ENCODE measurements at regions of chr1 and their contacts with region 1.

Region 1: DNA sequence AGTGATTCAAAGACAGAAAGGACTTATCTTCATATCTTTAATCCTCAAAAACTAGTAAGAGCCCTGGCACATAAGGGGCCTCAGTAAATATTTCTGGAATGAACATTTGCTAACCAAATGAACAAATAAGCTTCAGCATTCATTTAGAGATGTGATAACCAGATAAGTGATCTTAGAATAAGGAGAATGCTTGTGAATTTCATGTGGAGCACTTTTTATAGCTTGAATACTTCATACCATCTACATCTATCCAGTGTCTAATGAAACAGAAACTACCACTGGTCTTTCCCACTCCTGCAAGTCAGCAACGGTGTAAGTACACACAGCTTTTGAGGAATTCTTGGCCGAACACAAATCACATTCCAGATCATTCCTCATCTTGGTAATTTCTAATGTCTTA is 38.5 kb downstream of the EDEM3 start:
- DNase-seq: no peak
- ATAC-seq: no peak
- H3K4me3 ChIP-seq: no peak overlapping the region
- H3K4me3 Mint-ChIP-seq: no peak overlapping the region
- H3K27ac ChIP-seq: no peak overlapping the region
- H3K27ac Mint-ChIP-seq: peak overlapping the region; percentile 56
- H3K4me1 ChIP-seq: no peaks in the 10 kb centered on the region
- H3K4me1 Mint-ChIP-seq: no peaks in the 10 kb centered on the region
- H3K27me3 ChIP-seq: no peaks in the 10 kb centered on the region
- H3K27me3 Mint-ChIP-seq: no peaks in the 10 kb centered on the region
- CTCF ChIP-seq: no peak

Region 2: DNA sequence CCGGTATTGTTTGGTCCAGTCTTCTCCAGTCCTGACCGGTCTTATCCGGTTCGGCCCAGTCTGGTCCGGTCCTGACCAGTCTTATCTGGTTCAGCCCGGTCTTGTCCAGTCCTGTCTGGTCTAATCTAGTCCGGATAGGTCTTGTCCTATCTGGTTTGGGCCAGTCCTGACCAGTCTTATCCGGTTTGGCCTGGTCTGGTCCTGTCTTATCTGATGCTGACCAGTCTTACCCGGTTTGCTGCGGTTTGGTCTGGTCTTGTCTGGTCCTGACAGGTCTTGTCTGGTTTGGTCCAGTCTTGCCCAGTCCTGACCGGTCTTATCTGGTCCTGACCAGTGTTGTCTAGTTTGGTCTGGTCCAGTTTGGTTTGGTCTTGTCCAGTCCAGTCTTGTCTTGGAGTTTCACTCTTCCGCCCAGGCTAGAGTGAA is 1846.9 kb before region 1 on chr1:
- CTCF ChIA-PET with region 1: no interaction called
- POLR2A ChIA-PET with region 1: no interaction called
- intact Hi-C with region 1: loop called in 1 of 2 experiments (anchors 10 kb)
- DNase-seq: peak in 3 of 9 experiments; percentile 13 to 20 (median 19)
- ATAC-seq: no peak
- H3K4me3 ChIP-seq: no peak overlapping the region
- H3K4me3 Mint-ChIP-seq: no peak overlapping the region
- H3K27ac ChIP-seq: no peak overlapping the region
- H3K27ac Mint-ChIP-seq: peak overlapping the region; percentile 13
- H3K4me1 ChIP-seq: no peaks in the 10 kb centered on the region
- H3K4me1 Mint-ChIP-seq: peaks cover 7% of the 10 kb centered on the region
- H3K27me3 ChIP-seq: no peaks in the 10 kb centered on the region
- H3K27me3 Mint-ChIP-seq: no peaks in the 10 kb centered on the region
- CTCF ChIP-seq: no peak

Region 3: GRCh38 chr1:184759651-184760050 is 43.5 kb after region 1 on chr1:
- CTCF ChIA-PET with region 1: no interaction called
- POLR2A ChIA-PET with region 1: no interaction called
- intact Hi-C with region 1: no loop called
- DNase-seq: no peak
- ATAC-seq: no peak
- H3K4me3 ChIP-seq: no peak overlapping the region
- H3K4me3 Mint-ChIP-seq: no peak overlapping the region
- H3K27ac ChIP-seq: no peak overlapping the region
- H3K27ac Mint-ChIP-seq: no peak overlapping the region
- H3K4me1 ChIP-seq: peaks cover 8% of the 10 kb centered on the region
- H3K4me1 Mint-ChIP-seq: peaks cover 13% of the 10 kb centered on the region
- H3K27me3 ChIP-seq: no peaks in the 10 kb centered on the region
- H3K27me3 Mint-ChIP-seq: no peaks in the 10 kb centered on the region
- CTCF ChIP-seq: no peak

Region 4: DNA sequence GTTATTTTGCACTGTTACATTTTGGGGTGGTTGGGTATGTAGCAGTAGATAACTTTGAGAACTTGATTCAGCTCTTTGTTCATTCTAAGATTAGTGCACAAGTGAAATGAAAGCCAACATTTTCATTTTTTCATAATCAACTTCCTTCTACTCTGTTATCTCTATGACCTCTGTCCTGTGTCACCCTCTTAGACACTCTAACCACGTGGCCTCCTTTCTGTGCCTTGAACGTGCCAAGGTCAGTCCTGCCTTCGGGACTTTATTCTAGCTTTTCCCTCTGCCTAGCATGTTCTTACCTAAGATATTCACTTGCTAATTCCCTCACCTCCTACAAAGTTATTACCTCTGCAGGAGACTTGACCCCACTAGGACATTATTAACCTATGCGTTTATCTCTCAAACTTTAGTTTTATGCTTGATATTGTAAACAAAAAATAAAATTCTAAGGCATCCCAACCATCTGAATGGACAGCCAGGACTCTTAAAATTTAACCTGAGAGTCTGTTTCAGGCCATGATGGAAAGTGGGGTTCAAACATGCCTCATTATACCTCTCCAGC is 57.7 kb after region 1 on chr1:
- CTCF ChIA-PET with region 1: no interaction called
- POLR2A ChIA-PET with region 1: no interaction called
- intact Hi-C with region 1: no loop called
- DNase-seq: no peak
- ATAC-seq: no peak
- H3K4me3 ChIP-seq: no peak overlapping the region
- H3K4me3 Mint-ChIP-seq: no peak overlapping the region
- H3K27ac ChIP-seq: no peak overlapping the region
- H3K27ac Mint-ChIP-seq: no peak overlapping the region
- H3K4me1 ChIP-seq: no peaks in the 10 kb centered on the region
- H3K4me1 Mint-ChIP-seq: peaks cover 2% of the 10 kb centered on the region
- H3K27me3 ChIP-seq: no peaks in the 10 kb centered on the region
- H3K27me3 Mint-ChIP-seq: no peaks in the 10 kb centered on the region
- CTCF ChIP-seq: no peak

Region 5: GRCh38 chr1:186330758-186331157 is 1614.6 kb after region 1 on chr1:
- CTCF ChIA-PET with region 1: no interaction called
- POLR2A ChIA-PET with region 1: no interaction called
- intact Hi-C with region 1: loop called in 1 of 2 experiments (anchors 10 kb)
- DNase-seq: peak in 1 of 9 experiments; percentile 28
- ATAC-seq: no peak
- H3K4me3 ChIP-seq: no peak overlapping the region
- H3K4me3 Mint-ChIP-seq: no peak overlapping the region
- H3K27ac ChIP-seq: no peak overlapping the region
- H3K27ac Mint-ChIP-seq: no peak overlapping the region
- H3K4me1 ChIP-seq: no peaks in the 10 kb centered on the region
- H3K4me1 Mint-ChIP-seq: peaks cover 2% of the 10 kb centered on the region
- H3K27me3 ChIP-seq: no peaks in the 10 kb centered on the region
- H3K27me3 Mint-ChIP-seq: no peaks in the 10 kb centered on the region
- CTCF ChIP-seq: no peak

Region 6: GRCh38 chr1:186363891-186364290 is 1647.7 kb after region 1 on chr1:
- CTCF ChIA-PET with region 1: no interaction called
- POLR2A ChIA-PET with region 1: no interaction called
- intact Hi-C with region 1: loop called in 1 of 2 experiments (anchors 10 kb)
- DNase-seq: no peak
- ATAC-seq: no peak
- H3K4me3 ChIP-seq: no peak overlapping the region
- H3K4me3 Mint-ChIP-seq: no peak overlapping the region
- H3K27ac ChIP-seq: no peak overlapping the region
- H3K27ac Mint-ChIP-seq: no peak overlapping the region
- H3K4me1 ChIP-seq: no peaks in the 10 kb centered on the region
- H3K4me1 Mint-ChIP-seq: peaks cover 13% of the 10 kb centered on the region
- H3K27me3 ChIP-seq: no peaks in the 10 kb centered on the region
- H3K27me3 Mint-ChIP-seq: no peaks in the 10 kb centered on the region
- CTCF ChIP-seq: no peak